Activated CD4-positive, alpha-beta memory T cell treated with anti-CD3 and anti-CD28 coated beads for 36 hours (primary cell): ENCODE measurements at regions of chr20 and their contacts with region 1.

Region 1: GRCh38 chr20:354298-355064 is 7.6 kb downstream of the NRSN2 start:
- DNase-seq: peak; percentile 87
- H3K4me3 Mint-ChIP-seq: no peak overlapping the region
- H3K27ac Mint-ChIP-seq: no peak overlapping the region
- H3K4me1 Mint-ChIP-seq: no peaks in the 10 kb centered on the region
- H3K27me3 Mint-ChIP-seq: no peaks in the 10 kb centered on the region

Region 2: DNA sequence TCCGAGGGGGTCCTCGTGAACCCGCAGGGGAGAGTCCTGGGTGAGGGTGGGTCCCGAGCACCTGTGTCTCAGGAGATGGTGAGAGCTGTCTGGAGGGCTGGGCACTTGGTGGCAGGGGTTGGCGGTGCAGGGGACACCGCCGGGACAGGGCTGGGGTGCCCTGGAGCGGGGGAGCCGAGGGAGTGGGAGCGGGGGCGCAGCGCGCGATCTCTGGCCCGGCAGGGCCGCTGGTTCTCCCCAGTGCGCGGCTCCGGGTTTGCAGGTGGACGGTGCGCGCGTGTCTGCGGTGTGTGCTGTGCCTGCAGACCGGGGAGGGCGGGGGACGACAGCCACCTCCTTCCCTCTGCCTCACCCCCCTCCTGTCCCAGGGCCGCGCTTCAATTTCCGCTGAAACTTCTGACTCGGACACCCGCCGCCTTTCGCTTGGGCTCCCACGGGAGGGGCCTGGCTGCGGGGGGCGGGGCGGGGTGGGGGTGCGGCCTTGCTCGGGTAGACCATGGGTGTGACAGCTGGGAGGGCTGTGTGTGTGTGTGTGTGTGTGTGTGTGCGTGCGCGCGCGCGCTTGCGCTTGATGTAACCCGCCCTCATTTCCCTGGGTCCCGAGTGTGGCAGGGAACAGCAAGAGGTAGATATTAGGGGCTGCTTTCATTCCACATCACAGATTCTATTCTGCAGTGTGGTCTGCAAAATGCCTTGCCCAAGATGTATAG is 27.3 kb after region 1 on chr20:
- CTCF ChIA-PET with region 1: interaction called, 10 read pairs
- POLR2A ChIA-PET with region 1: no interaction called
- intact Hi-C with region 1: loop called (anchors 2 kb)
- DNase-seq: peak; percentile 89
- H3K4me3 Mint-ChIP-seq: peak overlapping the region; percentile 76
- H3K27ac Mint-ChIP-seq: peak overlapping the region; percentile 84
- H3K4me1 Mint-ChIP-seq: peaks cover 13% of the 10 kb centered on the region
- H3K27me3 Mint-ChIP-seq: no peaks in the 10 kb centered on the region

Region 3: DNA sequence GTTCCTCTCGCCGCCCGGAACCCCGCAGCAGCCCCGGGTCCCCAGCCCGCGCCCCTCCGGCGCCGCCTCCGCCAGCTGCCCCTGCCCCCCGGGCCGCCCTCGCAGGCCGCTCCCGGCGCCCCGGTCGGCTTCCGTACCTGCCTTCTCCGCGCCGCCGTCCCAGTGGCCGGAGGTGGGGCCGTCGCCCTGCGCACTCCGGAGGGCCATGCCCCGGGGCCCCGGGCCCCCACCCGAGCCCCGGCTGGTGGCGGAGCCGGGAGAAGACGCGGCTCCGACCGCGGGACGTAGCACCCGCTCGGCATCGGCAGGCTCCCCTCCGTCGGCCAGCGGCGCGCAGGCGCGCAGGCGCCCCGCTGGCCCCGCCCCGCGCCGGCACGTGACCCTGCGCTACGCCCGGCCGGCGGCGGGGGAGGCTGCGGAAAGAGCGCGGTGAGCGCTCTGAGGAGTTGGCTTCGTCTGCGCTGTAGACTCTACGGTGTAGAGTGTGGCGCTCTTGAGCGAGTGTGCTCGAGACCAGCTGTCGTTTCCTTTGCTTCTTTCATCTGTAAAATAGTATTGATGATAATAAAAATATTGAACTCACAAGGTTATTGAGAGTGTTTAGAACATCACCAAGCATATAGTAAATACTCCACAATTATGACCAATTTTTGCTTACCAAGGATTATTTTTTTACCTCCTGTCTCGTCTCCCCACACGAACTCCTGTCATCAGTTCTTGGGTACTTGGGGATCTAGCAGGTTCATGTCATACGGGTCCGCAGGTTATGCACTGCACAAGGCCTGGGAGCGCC is 107.9 kb after region 1 on chr20 and contains the start of gene TBC1D20:
- CTCF ChIA-PET with region 1: interaction called, 7 read pairs
- POLR2A ChIA-PET with region 1: no interaction called
- intact Hi-C with region 1: loop called (anchors 5 kb)
- DNase-seq: peak; percentile 88
- H3K4me3 Mint-ChIP-seq: peak within 1 kb of the TSS; percentile 86
- H3K27ac Mint-ChIP-seq: peak within 1 kb of the TSS; percentile 84
- H3K4me1 Mint-ChIP-seq: peaks cover 38% of the 10 kb centered on the region
- H3K27me3 Mint-ChIP-seq: no peaks in the 10 kb centered on the region
- total RNA-seq, gene TBC1D20: 18.8 to 20.4 TPM

Region 4: GRCh38 chr20:478949-479429 is 124.5 kb after region 1 on chr20:
- CTCF ChIA-PET with region 1: interaction called, 58 read pairs
- POLR2A ChIA-PET with region 1: no interaction called
- intact Hi-C with region 1: loop called (anchors 1 kb)
- DNase-seq: no peak
- H3K4me3 Mint-ChIP-seq: no peak overlapping the region
- H3K27ac Mint-ChIP-seq: no peak overlapping the region
- H3K4me1 Mint-ChIP-seq: peaks cover 12% of the 10 kb centered on the region
- H3K27me3 Mint-ChIP-seq: no peaks in the 10 kb centered on the region